ENCODE measurements at regions of chr1 and their contacts with region 1.

Region 1: DNA sequence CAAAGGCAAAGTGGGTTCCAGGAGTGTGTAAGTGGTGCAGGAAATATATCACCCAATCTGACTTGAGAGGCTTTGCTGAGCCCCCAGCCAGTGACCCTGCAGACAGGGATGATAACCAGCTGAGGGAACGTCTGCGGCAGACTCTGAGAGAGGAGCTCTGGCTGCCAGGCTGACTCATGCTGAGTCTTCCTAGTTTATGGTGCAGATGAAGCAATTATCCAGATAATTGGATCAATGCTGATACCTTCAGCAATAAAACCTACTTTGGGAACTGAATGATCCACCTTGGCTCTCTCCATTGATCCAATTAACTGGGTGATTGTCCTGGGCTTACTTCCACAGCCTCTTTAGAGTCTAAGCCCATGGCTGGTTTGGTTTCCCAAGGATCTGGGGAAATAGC is 7.3 kb downstream of the C8B start:
- DNase-seq: no peak
- H3K4me3 ChIP-seq: no peak overlapping the region
- H3K27ac ChIP-seq: no peak overlapping the region
- H3K4me1 ChIP-seq: no peaks in the 10 kb centered on the region
- H3K27me3 ChIP-seq: no peaks in the 10 kb centered on the region
- CTCF ChIP-seq: no peak
- POLR2A ChIP-seq: no peak

Region 2: DNA sequence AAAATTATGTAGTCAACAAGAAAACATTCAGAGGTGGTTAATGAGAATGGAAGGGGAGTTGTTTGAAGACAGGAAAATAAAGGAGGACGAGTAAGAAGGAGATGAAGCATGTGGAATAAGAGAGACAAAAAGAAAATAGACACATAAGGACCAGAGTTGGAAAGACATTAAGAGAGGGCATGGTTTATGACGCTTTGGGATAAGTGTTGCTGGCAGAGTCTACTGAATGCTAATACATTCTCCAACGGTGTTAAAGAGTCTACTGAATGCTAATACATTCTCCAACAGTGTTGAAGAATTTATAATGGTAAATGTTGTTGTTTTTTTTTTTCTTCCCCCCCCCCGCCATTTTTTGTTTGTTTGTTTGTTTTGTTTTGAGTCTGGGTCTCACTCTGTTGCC is 300.3 kb before region 1 on chr1:
- CTCF ChIA-PET with region 1: no interaction called
- POLR2A ChIA-PET with region 1: no interaction called
- dilution Hi-C with region 1: no loop called
- intact Hi-C with region 1: loop called (anchors 5 kb)
- DNase-seq: no peak
- H3K4me3 ChIP-seq: no peak overlapping the region
- H3K27ac ChIP-seq: no peak overlapping the region
- H3K4me1 ChIP-seq: peaks cover 6% of the 10 kb centered on the region
- H3K27me3 ChIP-seq: no peaks in the 10 kb centered on the region
- CTCF ChIP-seq: no peak
- POLR2A ChIP-seq: no peak

Measured in endothelial cell of umbilical vein (primary cell).